K562 (cell line): ENCODE measurements at regions of chr1 and their contacts with region 1.

Region 1: DNA sequence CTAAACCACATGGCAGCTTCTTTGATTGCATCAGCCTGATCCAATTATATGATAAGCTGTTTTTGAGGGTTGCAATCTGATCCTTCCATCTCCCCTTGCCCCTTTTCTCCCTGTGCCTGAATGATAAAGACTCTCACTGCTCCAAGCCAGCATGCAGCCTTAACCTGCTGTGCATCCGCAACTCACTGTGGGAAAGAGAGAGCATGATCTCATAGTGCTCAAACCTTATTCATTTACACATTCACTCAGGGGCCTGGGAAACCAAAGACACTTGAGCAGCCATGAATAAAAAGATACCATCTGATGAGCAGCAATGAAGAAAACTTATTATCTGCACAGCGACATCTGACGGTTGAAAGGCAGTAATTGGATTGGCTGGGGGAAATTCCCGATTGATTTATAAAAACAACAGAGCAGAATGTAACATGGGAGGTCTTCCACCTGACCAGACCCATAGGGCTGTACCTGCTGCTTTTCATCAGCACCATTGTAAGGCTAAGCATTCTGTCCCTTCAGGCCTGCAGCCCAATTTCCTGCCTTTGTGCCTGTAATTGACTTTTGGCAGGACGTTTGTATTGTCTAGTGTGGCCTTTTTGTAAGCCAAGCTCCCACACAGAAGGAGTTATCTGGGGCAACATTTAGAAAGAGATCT is 62.5 kb downstream of the KIAA0040 start:
- DNase-seq: peak in 2 of 4 experiments; percentile 22 to 23
- ATAC-seq: no peak; the same call in 2 of the 3 replicates
- H3K4me3 ChIP-seq: no peak overlapping the region
- H3K27ac ChIP-seq: no peak overlapping the region
- H3K4me1 ChIP-seq: no peaks in the 10 kb centered on the region; a peak in 2 of 5 replicates
- H3K27me3 ChIP-seq: peaks cover 12 to 24% of the 10 kb centered on the region in 2 experiments
- CTCF ChIP-seq: peak in 2 of 3 experiments; percentile 16 to 28; a peak in 2 of 6 replicates
- EP300 ChIP-seq: no peak
- POLR2A ChIP-seq: no peak
- RAD21 ChIP-seq: no peak

Region 2: DNA sequence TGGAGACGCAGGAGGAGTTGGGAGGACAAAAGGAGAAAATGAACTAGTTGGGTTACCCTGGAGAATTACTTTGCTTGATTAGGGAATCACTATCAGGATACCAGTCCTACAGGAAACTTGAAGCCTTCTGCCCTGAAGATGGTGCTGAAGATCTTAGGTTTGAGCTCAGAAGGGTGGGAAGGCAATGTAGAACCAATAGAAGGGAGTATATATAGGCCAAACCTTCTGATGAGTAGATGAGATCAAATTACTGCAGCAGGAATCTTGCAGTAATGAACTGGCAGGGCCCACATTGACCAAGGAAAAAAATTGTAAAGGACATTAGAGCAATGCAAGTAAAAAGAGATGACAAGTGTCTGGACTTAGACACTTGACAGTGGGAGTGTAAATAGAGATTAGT is 246.7 kb before region 1 on chr1:
- CTCF ChIA-PET with region 1: no interaction called
- POLR2A ChIA-PET with region 1: no interaction called
- in situ Hi-C with region 1: no loop called
- intact Hi-C with region 1: loop called (anchors 10 kb)
- DNase-seq: peak in 2 of 4 experiments; percentile 32 to 52
- ATAC-seq: peak; percentile 81
- H3K4me3 ChIP-seq: no peak overlapping the region
- H3K27ac ChIP-seq: no peak overlapping the region
- H3K4me1 ChIP-seq: peaks cover 6 to 13% of the 10 kb centered on the region in 2 experiments; a peak in 3 of 5 replicates
- H3K27me3 ChIP-seq: no peaks in the 10 kb centered on the region
- CTCF ChIP-seq: peak; percentile 34 to 66 (median 36); a peak in 3 of 6 replicates
- EP300 ChIP-seq: no peak
- POLR2A ChIP-seq: no peak
- RAD21 ChIP-seq: peak; percentile 63 to 75

Region 3: DNA sequence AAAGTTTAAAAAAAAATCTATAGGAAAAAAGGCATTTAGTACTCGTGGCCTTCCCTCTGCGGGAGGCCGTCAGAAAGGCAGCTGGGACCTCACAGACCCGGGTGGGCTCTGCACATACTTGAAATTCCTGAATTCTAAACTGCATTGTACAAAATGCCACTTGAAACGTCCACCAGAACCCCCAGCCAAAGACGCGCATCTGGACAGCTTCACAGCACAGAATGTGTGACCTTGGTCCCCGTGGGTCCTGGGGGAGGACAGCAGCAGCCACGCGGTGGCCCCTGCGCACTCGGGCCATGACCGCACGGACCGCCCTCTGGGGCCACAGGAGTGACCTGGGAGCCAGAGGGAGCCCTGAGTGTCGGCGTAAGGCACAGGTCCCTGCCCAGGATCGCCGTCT is 86.3 kb before region 1 on chr1:
- CTCF ChIA-PET with region 1: no interaction called
- POLR2A ChIA-PET with region 1: no interaction called
- in situ Hi-C with region 1: loop called (anchors 5 kb)
- intact Hi-C with region 1: no loop called
- DNase-seq: no peak
- ATAC-seq: no peak; the same call in 2 of the 3 replicates
- H3K4me3 ChIP-seq: no peak overlapping the region
- H3K27ac ChIP-seq: no peak overlapping the region
- H3K4me1 ChIP-seq: peaks cover 0 to 11% of the 10 kb centered on the region in 2 experiments; a peak in 1 of 5 replicates
- H3K27me3 ChIP-seq: peaks cover 41 to 56% of the 10 kb centered on the region in 2 experiments
- CTCF ChIP-seq: no peak
- EP300 ChIP-seq: no peak
- POLR2A ChIP-seq: no peak
- RAD21 ChIP-seq: no peak